ENCODE measurements at regions of chr4 and their contacts with region 1.

Region 1: GRCh38 chr4:177448850-177449249 is 6.6 kb upstream of the AGA start:
- DNase-seq: no peak
- H3K4me3 Mint-ChIP-seq: no peak overlapping the region
- H3K27ac Mint-ChIP-seq: no peak overlapping the region
- H3K4me1 Mint-ChIP-seq: no peaks in the 10 kb centered on the region
- H3K27me3 Mint-ChIP-seq: no peaks in the 10 kb centered on the region
- CTCF ChIP-seq: no peak

Region 2: GRCh38 chr4:177410571-177410970 is 38.3 kb before region 1 on chr4:
- CTCF ChIA-PET with region 1: no interaction called
- intact Hi-C with region 1: no loop called
- DNase-seq: no peak
- H3K4me3 Mint-ChIP-seq: no peak overlapping the region
- H3K27ac Mint-ChIP-seq: no peak overlapping the region
- H3K4me1 Mint-ChIP-seq: peaks cover 67% of the 10 kb centered on the region
- H3K27me3 Mint-ChIP-seq: no peaks in the 10 kb centered on the region
- CTCF ChIP-seq: no peak

Region 3: DNA sequence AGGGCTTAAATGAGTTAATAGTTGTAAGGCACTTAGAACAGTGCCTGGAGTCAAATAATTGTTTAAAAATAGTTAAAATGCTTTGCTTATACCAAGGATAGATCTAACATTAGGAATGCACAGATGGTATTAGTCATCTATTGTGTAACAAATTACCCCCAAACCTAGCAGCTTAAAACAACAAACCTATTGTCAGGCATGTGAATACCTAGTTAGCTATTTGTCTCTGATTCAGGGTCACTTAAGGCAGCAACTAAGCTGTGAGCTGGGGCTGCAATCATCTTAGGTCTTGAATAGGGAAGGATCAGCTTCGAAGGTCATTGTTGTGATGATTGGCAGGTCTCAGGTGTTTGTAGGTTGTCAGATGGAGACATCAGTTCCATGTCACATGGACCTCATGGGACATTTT is 35.8 kb after region 1 on chr4:
- CTCF ChIA-PET with region 1: no interaction called
- intact Hi-C with region 1: loop called (anchors 5 kb)
- DNase-seq: peak; percentile 22
- H3K4me3 Mint-ChIP-seq: no peak overlapping the region
- H3K27ac Mint-ChIP-seq: peak overlapping the region; percentile 81
- H3K4me1 Mint-ChIP-seq: peaks cover 49% of the 10 kb centered on the region
- H3K27me3 Mint-ChIP-seq: no peaks in the 10 kb centered on the region
- CTCF ChIP-seq: no peak

Measured in Calu3 (cell line).